CD14-positive monocyte (primary cell): ENCODE measurements at regions of chr12 and their contacts with region 1.

Region 1: GRCh38 chr12:6135071-6135470 is 10.6 kb upstream of the VWF start:
- DNase-seq: no peak
- H3K4me3 ChIP-seq: no peak overlapping the region
- H3K4me3 Mint-ChIP-seq: no peak overlapping the region
- H3K27ac ChIP-seq: no peak overlapping the region
- H3K27ac Mint-ChIP-seq: peak overlapping the region in 1 of 7 donors; percentile 42
- H3K4me1 ChIP-seq: peaks cover 22 to 23% of the 10 kb centered on the region in 2 donors
- H3K4me1 Mint-ChIP-seq: peaks cover 27% of the 10 kb centered on the region
- H3K27me3 ChIP-seq: no peaks in the 10 kb centered on the region
- H3K27me3 Mint-ChIP-seq: peaks cover 0 to 9% (median 0%) of the 10 kb centered on the region in 3 donors
- CTCF ChIP-seq: no peak

Region 2: DNA sequence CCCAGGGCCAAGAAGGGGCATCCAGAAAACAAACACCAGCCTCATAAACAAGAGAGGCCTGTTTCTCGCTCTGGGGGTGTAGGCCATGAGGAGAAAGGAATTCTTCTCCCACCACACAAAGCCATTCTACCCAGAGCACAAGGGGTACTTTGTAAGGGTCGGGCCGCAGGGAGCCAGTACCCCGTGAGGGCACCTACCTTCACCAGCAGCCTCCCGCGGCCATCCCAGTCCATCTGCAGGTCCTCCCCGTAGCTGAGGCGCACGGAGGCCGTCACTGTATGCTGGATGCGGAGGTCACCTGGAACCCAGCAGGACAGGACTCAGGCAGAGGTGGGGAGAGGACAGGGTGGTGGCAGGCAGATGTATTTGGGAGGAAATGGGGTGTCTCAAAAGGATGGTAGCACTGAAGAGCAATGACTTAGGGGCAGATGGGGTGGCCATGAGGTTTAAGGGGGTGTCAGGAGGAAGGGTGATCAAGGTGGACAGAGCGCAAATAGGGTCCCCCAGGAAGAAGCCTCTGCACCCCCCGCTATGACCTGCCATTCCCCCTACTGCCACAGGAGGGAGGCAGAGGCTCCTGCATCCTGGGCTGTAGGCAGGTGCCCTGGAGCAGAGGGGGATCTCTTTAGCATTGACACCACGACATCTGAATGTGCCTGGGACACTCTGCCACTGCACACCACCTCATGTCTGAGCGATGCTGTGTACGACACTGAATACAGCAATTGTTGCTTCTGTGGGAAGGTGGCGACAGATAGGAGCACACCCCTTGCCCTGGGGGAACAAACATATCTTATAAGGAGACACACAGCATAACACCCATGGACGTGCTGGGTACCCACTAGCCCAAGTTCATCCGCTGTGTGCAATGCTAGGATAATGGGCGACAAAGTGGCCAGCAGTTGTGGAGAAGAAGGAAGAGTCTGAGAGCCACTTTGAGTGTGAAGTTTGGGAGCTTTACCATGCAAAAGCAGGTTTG is 72.0 kb before region 1 on chr12:
- intact Hi-C with region 1: loop called in 1 of 2 experiments (anchors 5 kb)
- DNase-seq: peak; percentile 53 to 67 (median 57)
- H3K4me3 ChIP-seq: no peak overlapping the region
- H3K4me3 Mint-ChIP-seq: no peak overlapping the region
- H3K27ac ChIP-seq: no peak overlapping the region
- H3K27ac Mint-ChIP-seq: peak overlapping the region in 2 of 7 donors; percentile 40 to 61
- H3K4me1 ChIP-seq: no peaks in the 10 kb centered on the region
- H3K4me1 Mint-ChIP-seq: peaks cover 20% of the 10 kb centered on the region
- H3K27me3 ChIP-seq: no peaks in the 10 kb centered on the region
- H3K27me3 Mint-ChIP-seq: peaks cover 9 to 13% (median 10%) of the 10 kb centered on the region in 3 donors
- CTCF ChIP-seq: peak; percentile 98

Region 3: DNA sequence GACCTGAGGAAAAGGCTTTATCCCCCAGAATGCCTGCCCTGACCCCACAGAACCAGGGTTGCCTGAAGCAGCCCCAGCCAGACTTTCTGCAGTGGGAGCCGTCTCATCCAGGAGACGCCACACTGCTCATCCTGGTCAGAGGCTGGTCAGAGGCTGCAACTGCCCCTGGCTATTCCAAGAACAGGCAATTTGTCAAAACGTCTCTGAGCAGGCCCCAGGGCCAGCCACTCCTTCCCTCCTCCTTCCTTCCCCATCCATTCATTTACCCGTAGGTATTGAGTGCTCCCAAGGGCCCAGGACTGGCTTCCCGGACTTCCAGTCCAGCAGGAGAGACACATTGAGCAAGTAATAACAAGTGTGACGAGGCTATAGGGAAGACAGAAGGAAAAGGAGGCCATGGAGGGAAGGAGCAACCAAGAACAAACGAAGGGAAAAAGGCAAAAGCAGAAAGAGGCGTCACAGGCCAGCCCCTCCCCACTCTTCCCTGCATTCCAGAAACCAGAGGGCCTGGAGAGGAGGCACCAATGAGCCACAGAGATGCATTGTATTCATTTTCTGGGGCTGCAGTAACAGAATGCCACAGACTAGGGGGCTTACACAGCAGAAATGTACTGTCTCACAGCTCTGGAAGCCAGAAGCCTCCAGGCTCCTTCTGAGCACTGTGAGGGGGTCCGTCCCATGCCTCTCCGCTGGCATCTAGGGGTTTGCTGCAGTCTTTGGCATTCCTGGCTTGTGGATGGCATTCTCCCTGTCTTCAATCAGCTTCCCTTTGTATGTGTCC is 44.1 kb after region 1 on chr12:
- intact Hi-C with region 1: loop called in 1 of 2 experiments (anchors 5 kb)
- DNase-seq: no peak
- H3K4me3 ChIP-seq: no peak overlapping the region
- H3K4me3 Mint-ChIP-seq: peak overlapping the region in 1 of 2 donors; percentile 7
- H3K27ac ChIP-seq: no peak overlapping the region
- H3K27ac Mint-ChIP-seq: peak overlapping the region in 1 of 7 donors; percentile 58
- H3K4me1 ChIP-seq: peaks cover 34 to 36% of the 10 kb centered on the region in 2 donors
- H3K4me1 Mint-ChIP-seq: peaks cover 3% of the 10 kb centered on the region
- H3K27me3 ChIP-seq: no peaks in the 10 kb centered on the region
- H3K27me3 Mint-ChIP-seq: peaks cover 6 to 8% (median 7%) of the 10 kb centered on the region in 3 donors
- CTCF ChIP-seq: no peak

Region 4: DNA sequence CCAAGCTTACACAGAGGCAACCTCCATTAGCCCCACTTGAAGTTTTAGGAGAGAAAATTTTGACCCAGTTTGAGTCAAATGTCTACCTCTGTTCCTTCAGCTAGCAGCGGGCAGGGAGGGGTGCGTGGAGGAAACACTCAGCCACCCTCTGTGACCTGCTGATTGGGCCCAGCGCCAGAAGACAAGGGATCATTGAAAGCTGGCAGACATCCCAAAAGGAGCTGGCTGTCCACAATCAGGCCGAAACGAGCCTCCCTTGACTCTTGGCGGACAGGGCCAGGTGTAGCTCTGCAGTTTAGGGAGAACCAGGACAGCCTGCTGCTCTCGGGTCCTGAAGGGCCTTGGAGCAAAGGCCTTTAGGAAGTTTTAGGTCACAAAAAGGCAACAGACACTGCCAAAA is 106.4 kb after region 1 on chr12:
- intact Hi-C with region 1: no loop called
- DNase-seq: no peak
- H3K4me3 ChIP-seq: no peak overlapping the region
- H3K4me3 Mint-ChIP-seq: no peak overlapping the region
- H3K27ac ChIP-seq: no peak overlapping the region
- H3K27ac Mint-ChIP-seq: peak overlapping the region in 1 of 7 donors; percentile 21
- H3K4me1 ChIP-seq: no peaks in the 10 kb centered on the region
- H3K4me1 Mint-ChIP-seq: no peaks in the 10 kb centered on the region
- H3K27me3 ChIP-seq: no peaks in the 10 kb centered on the region
- H3K27me3 Mint-ChIP-seq: peaks cover 0 to 5% (median 5%) of the 10 kb centered on the region in 3 donors
- CTCF ChIP-seq: no peak